Mammary epithelial cell (primary cell): ENCODE measurements at regions of chr12 and their contacts with region 1.

Region 1: GRCh38 chr12:17829813-17830212 is 260.2 kb downstream of the RERGL start:
- DNase-seq: no peak
- H3K4me3 ChIP-seq: no peak overlapping the region
- H3K27ac ChIP-seq: no peak overlapping the region
- H3K4me1 ChIP-seq: no peaks in the 10 kb centered on the region
- H3K27me3 ChIP-seq: no peaks in the 10 kb centered on the region
- CTCF ChIP-seq: no peak

Region 2: DNA sequence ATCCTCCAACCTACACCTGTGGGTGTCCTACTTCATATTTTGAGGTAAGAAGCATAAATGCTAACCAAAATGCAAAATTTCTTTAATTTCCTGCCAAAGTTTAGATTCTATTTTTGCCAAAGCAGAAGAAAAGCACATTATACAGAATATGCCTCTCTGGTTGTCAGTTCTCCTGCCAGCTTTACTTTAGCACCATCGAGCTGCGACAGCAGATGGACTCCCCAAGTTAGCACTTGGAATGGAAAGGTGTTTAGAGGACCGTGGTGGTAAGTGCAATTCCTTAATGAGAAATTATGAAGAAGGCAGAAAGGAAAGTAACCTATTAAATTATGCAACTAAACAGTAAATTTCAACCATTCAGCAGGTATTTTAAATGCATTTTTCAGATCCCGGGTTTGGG is 66.4 kb before region 1 on chr12:
- CTCF ChIA-PET with region 1: no interaction called
- dilution Hi-C with region 1: no loop called
- in situ Hi-C with region 1: no loop called
- intact Hi-C with region 1: no loop called
- DNase-seq: no peak
- H3K4me3 ChIP-seq: no peak overlapping the region
- H3K27ac ChIP-seq: no peak overlapping the region
- H3K4me1 ChIP-seq: no peaks in the 10 kb centered on the region
- H3K27me3 ChIP-seq: no peaks in the 10 kb centered on the region
- CTCF ChIP-seq: no peak

Region 3: GRCh38 chr12:18919871-18920511 is 1090.2 kb after region 1 on chr12:
- CTCF ChIA-PET with region 1: interaction called, 10 read pairs
- dilution Hi-C with region 1: no loop called
- in situ Hi-C with region 1: no loop called
- intact Hi-C with region 1: no loop called
- DNase-seq: no peak
- H3K4me3 ChIP-seq: no peak overlapping the region
- H3K27ac ChIP-seq: no peak overlapping the region
- H3K4me1 ChIP-seq: no peaks in the 10 kb centered on the region
- H3K27me3 ChIP-seq: no peaks in the 10 kb centered on the region
- CTCF ChIP-seq: no peak